IMR-90 (cell line): ENCODE measurements at regions of chr4 and their contacts with region 1.

Region 1: DNA sequence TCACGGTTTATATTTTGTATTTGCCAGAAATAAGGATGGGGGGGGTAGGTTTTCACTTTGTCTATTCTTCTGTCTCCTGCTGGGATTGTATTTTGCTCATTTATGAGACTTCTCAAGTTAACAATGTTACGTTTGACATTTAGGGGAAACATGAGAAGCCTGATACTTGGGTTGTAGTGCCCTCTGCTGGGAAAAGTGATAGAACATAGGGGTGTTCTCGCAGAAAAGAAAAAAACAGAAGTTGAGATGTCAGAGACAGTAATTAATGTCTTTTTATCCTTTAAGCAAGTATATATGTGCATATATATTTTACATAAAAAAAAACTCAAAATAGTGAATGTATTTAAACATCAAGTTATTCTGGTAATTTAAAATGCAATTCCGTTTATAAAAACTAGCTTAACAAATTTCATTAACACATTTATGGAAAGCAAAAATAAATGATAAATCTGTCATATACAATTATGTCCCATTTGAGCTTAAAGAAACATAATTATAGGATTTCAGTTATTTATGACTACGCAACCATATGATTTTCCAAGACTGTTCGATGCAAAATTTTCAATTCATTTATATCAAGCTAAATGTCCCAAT is 46.0 kb upstream of the TMPRSS11F start:
- DNase-seq: peak; percentile 51
- ATAC-seq: peak; percentile 68
- H3K4me3 ChIP-seq: no peak overlapping the region
- H3K27ac ChIP-seq: no peak overlapping the region
- H3K4me1 ChIP-seq: no peaks in the 10 kb centered on the region
- H3K27me3 ChIP-seq: no peaks in the 10 kb centered on the region
- CTCF ChIP-seq: peak; percentile 79
- POLR2A ChIP-seq: no peak
- RAD21 ChIP-seq: peak; percentile 77

Region 2: GRCh38 chr4:67746797-67747495 is 428.7 kb before region 1 on chr4:
- CTCF ChIA-PET with region 1: interaction called, 5 read pairs
- POLR2A ChIA-PET with region 1: no interaction called
- dilution Hi-C with region 1: no loop called
- in situ Hi-C with region 1: no loop called
- intact Hi-C with region 1: loop called (anchors 2 kb)
- DNase-seq: peak; percentile 51
- ATAC-seq: no peak; the same call in 1 of the 2 replicates
- H3K4me3 ChIP-seq: no peak overlapping the region
- H3K27ac ChIP-seq: no peak overlapping the region
- H3K4me1 ChIP-seq: peaks cover 2% of the 10 kb centered on the region; the same call in 1 of the 2 replicates
- H3K27me3 ChIP-seq: no peaks in the 10 kb centered on the region
- CTCF ChIP-seq: peak; percentile 55
- POLR2A ChIP-seq: no peak
- RAD21 ChIP-seq: peak; percentile 36; the same call in 1 of the 2 replicates

Region 3: GRCh38 chr4:67871867-67872266 is 303.8 kb before region 1 on chr4:
- CTCF ChIA-PET with region 1: no interaction called
- POLR2A ChIA-PET with region 1: no interaction called
- dilution Hi-C with region 1: no loop called
- in situ Hi-C with region 1: loop called (anchors 10 kb)
- intact Hi-C with region 1: loop called (anchors 1 kb)
- DNase-seq: peak; percentile 61
- ATAC-seq: peak; percentile 98
- H3K4me3 ChIP-seq: no peak overlapping the region
- H3K27ac ChIP-seq: no peak overlapping the region
- H3K4me1 ChIP-seq: 0 out of 2 replicates have a peak, but pooled peaks cover 2% of the 10 kb centered on the region
- H3K27me3 ChIP-seq: no peaks in the 10 kb centered on the region
- CTCF ChIP-seq: peak; percentile 85
- POLR2A ChIP-seq: no peak
- RAD21 ChIP-seq: peak; percentile 82

Region 4: DNA sequence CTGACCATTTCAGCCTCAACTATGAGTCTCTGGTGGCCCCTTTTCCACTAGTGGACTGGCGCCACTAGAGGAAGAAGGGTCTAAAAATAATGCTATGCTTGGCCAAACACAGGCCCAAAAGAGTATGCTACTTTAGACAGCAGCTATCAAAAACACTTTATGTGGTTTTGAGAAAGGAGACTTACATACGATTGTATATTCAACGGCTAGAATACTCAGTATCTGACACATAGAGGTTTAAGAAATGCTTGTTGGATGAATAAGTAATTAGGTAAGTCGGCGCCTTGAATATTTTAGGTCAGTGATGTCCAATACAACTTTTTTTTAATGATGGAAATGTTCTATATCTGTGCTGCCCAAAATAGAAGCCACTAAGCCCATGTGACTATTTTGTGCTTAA is 186.7 kb before region 1 on chr4:
- CTCF ChIA-PET with region 1: no interaction called
- POLR2A ChIA-PET with region 1: no interaction called
- dilution Hi-C with region 1: no loop called
- in situ Hi-C with region 1: no loop called
- intact Hi-C with region 1: loop called (anchors 1 kb)
- DNase-seq: no peak
- ATAC-seq: no peak
- H3K4me3 ChIP-seq: no peak overlapping the region
- H3K27ac ChIP-seq: no peak overlapping the region
- H3K4me1 ChIP-seq: no peaks in the 10 kb centered on the region
- H3K27me3 ChIP-seq: no peaks in the 10 kb centered on the region; the same call in 1 of the 2 replicates
- CTCF ChIP-seq: no peak
- POLR2A ChIP-seq: no peak
- RAD21 ChIP-seq: no peak

Region 5: GRCh38 chr4:68062501-68062900 is 113.2 kb before region 1 on chr4:
- CTCF ChIA-PET with region 1: no interaction called
- POLR2A ChIA-PET with region 1: no interaction called
- dilution Hi-C with region 1: no loop called
- in situ Hi-C with region 1: no loop called
- intact Hi-C with region 1: no loop called
- DNase-seq: no peak
- ATAC-seq: no peak
- H3K4me3 ChIP-seq: no peak overlapping the region
- H3K27ac ChIP-seq: no peak overlapping the region
- H3K4me1 ChIP-seq: no peaks in the 10 kb centered on the region
- H3K27me3 ChIP-seq: no peaks in the 10 kb centered on the region
- CTCF ChIP-seq: no peak
- POLR2A ChIP-seq: no peak
- RAD21 ChIP-seq: no peak

Region 6: DNA sequence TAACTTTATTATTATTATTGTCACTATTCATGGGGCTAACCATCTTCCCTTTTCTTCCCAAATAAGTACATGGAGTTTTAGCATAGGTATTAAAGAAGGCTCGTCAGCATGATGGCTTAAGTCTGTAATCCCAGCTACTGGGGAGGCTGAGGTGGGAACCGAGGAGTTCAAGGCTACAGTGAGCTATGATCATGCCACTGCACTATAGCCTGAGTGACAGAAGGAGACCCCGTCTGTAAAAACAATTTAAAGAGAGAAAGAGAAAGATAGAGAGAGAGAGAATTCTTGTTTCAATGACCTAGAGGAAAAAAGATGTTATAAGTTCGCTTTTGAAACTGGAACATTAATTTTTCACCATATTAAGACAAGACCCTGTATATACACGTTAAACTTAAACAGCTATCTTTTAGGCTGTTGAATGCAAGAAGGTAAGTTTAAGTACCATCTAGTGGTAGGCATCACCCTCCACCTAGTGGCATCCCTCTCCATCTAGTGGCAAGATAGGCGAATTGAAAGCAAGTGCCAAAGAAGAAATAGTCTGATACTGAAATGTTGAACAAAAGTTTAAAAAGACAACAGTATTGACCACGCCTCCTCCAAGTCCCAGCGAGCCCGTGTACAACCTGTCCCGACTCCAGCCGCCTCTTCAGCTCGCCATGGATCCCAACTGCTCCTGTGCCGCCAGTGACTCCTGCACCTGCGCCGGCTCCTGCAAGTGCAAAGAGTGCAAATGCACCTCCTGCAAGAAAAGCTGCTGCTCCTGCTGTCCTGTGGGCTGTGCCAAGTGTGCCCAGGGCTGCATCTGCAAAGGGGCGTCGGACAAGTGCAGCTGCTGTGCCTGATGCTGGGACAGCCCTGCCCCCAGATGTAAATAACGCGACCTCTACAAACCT is 200.3 kb after region 1 on chr4:
- CTCF ChIA-PET with region 1: no interaction called
- POLR2A ChIA-PET with region 1: no interaction called
- dilution Hi-C with region 1: no loop called
- in situ Hi-C with region 1: no loop called
- intact Hi-C with region 1: loop called (anchors 10 kb)
- DNase-seq: peak; percentile 64
- ATAC-seq: peak; percentile 77
- H3K4me3 ChIP-seq: no peak overlapping the region
- H3K27ac ChIP-seq: no peak overlapping the region
- H3K4me1 ChIP-seq: peaks cover 9% of the 10 kb centered on the region
- H3K27me3 ChIP-seq: no peaks in the 10 kb centered on the region
- CTCF ChIP-seq: peak; percentile 96
- POLR2A ChIP-seq: no peak
- RAD21 ChIP-seq: peak; percentile 91